ENCODE measurements at regions of chr18 and their contacts with region 1.

Region 1: GRCh38 chr18:79644006-79644665 is 35.5 kb upstream of the CTDP1 start:
- DNase-seq: peak; percentile 72
- ATAC-seq: peak; percentile 94

Region 2: DNA sequence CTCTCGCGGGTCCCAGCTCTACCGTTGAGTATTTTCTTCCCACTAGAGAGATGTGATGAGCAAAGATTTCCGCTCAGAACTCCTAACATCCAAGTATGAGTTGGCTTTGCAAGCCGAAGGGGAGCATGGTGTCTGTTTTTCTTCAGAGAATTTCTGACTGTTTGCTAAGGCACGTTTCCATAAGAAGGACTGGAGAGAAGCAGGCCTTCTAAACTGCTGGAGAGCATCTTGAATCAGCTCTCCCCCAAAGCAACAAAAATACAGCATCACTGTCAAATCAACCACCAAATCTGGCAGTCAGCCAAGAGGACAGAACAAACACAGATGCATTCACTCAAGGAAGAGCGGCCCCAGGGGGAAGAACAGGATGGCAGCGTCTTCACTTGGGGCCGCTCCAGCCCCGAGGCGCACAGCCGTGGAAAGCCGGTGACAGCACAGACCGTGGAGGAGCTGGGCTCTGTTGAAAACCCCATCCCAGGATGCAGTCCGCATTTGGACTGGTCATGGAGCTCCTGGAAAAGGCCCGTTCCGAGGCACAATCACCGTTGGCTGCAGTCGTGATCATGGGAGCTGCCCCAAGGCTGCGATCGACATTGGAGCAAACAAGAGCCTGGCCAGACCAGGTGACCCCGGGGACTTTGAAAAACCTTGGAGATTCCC is 147.0 kb before region 1 on chr18:
- intact Hi-C with region 1: no loop called
- DNase-seq: no peak
- ATAC-seq: peak; percentile 38

Region 3: GRCh38 chr18:79528846-79529245 is 115.3 kb before region 1 on chr18:
- intact Hi-C with region 1: loop called (anchors 5 kb)
- DNase-seq: no peak
- ATAC-seq: peak; percentile 46